ENCODE measurements at regions of chr10 and their contacts with region 1.

Region 1: DNA sequence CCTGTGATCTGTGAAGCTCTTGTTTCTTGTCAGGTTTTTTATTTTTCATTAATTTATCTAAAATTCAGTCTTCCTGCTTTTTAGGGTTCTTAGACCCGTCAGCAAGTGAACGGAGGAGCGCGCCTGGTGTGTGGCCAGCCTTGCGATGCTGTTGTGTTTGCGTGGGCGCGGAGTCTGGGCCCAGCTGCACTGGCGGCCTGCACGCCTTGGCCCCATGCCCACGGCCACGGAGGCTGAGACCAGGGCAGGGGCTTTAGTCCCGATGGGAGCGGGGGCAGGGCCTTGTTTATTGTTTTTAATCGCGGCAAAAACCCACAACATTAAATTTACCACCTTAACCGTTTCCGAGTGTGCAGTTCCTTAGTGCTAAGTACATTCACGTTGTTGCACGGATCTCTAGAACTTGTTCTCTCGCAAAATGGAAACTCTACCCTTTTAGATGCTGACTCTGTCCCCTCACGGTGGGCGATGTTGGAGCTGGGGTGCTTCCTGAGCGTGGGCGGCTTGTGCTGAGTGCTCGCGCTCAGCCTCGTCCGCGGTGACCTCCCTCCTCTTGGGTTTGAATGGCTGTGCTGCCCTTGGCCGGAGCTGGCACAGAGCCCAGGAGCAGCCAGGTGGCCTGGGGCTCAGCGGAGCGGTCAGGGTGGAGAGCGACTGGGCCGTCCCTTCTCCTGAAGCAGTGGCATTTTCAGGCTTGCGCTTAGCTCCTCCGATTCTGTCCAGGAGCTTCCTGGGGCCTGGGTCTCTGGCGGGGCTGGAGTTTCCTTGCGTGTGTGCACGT is 69.1 kb downstream of the INPP5A start:
- DNase-seq: no peak
- H3K4me3 ChIP-seq: peak overlapping the region in 1 of 2 donors; percentile 26
- H3K27ac ChIP-seq: no peak overlapping the region
- H3K4me1 ChIP-seq: peaks cover 36% of the 10 kb centered on the region
- H3K27me3 ChIP-seq: no peaks in the 10 kb centered on the region
- CTCF ChIP-seq: no peak
- POLR2A ChIP-seq: no peak

Region 2: GRCh38 chr10:131933016-131933695 is 673.6 kb before region 1 on chr10:
- intact Hi-C with region 1: loop called (anchors 10 kb)
- DNase-seq: no peak
- H3K4me3 ChIP-seq: no peak overlapping the region
- H3K27ac ChIP-seq: no peak overlapping the region
- H3K4me1 ChIP-seq: peaks cover 38% of the 10 kb centered on the region
- H3K27me3 ChIP-seq: no peaks in the 10 kb centered on the region
- CTCF ChIP-seq: no peak
- POLR2A ChIP-seq: no peak

Region 3: GRCh38 chr10:132762267-132762666 is 155.5 kb after region 1 on chr10:
- intact Hi-C with region 1: no loop called
- DNase-seq: no peak
- H3K4me3 ChIP-seq: no peak overlapping the region
- H3K27ac ChIP-seq: no peak overlapping the region
- H3K4me1 ChIP-seq: no peaks in the 10 kb centered on the region
- H3K27me3 ChIP-seq: no peaks in the 10 kb centered on the region
- CTCF ChIP-seq: no peak
- POLR2A ChIP-seq: no peak

Measured in vagina (tissue), 2 donors.